A673 (cell line): ENCODE measurements at regions of chr22 and their contacts with region 1.

Region 1: GRCh38 chr22:21001560-21002325 is at the start of gene THAP7:
- DNase-seq: peak; percentile 98
- H3K4me3 ChIP-seq: peak within 1 kb of the TSS; percentile 85
- H3K27ac ChIP-seq: peak within 1 kb of the TSS; percentile 95
- H3K4me1 ChIP-seq: peaks cover 18% of the 10 kb centered on the region
- H3K27me3 ChIP-seq: no peaks in the 10 kb centered on the region
- CTCF ChIP-seq: no peak
- total RNA-seq, gene THAP7: 38.5 TPM in 2 replicates

Region 2: GRCh38 chr22:20725987-20726558 is 275.7 kb before region 1 on chr22:
- CTCF ChIA-PET with region 1: no interaction called
- POLR2A ChIA-PET with region 1: no interaction called
- intact Hi-C with region 1: no loop called
- DNase-seq: no peak
- H3K4me3 ChIP-seq: no peak overlapping the region
- H3K27ac ChIP-seq: no peak overlapping the region
- H3K4me1 ChIP-seq: no peaks in the 10 kb centered on the region
- H3K27me3 ChIP-seq: no peaks in the 10 kb centered on the region
- CTCF ChIP-seq: no peak

Region 3: GRCh38 chr22:20918663-20919218 is 83.0 kb before region 1 on chr22:
- CTCF ChIA-PET with region 1: no interaction called
- POLR2A ChIA-PET with region 1: no interaction called
- intact Hi-C with region 1: loop called (anchors 2 kb)
- DNase-seq: peak; percentile 8
- H3K4me3 ChIP-seq: peak overlapping the region; percentile 95
- H3K27ac ChIP-seq: peak overlapping the region; percentile 97
- H3K4me1 ChIP-seq: peaks cover 15% of the 10 kb centered on the region
- H3K27me3 ChIP-seq: no peaks in the 10 kb centered on the region
- CTCF ChIP-seq: no peak

Region 4: GRCh38 chr22:21014202-21014725 is 12.5 kb after region 1 on chr22:
- CTCF ChIA-PET with region 1: no interaction called
- POLR2A ChIA-PET with region 1: no interaction called
- intact Hi-C with region 1: no loop called
- DNase-seq: peak; percentile 97
- H3K4me3 ChIP-seq: peak overlapping the region; percentile 51
- H3K27ac ChIP-seq: peak overlapping the region; percentile 32
- H3K4me1 ChIP-seq: peaks cover 18% of the 10 kb centered on the region
- H3K27me3 ChIP-seq: no peaks in the 10 kb centered on the region
- CTCF ChIP-seq: no peak